ENCODE measurements at regions of chr1 and their contacts with region 1.

Region 1: GRCh38 chr1:32716312-32717148 is 14.0 kb upstream of the SYNC start:
- DNase-seq: peak; percentile 91 to 98
- H3K4me3 ChIP-seq: peak overlapping the region in 3 of 4 experiments; percentile 9 to 28 (median 20); a peak in 4 of 8 replicates
- H3K27ac ChIP-seq: peak overlapping the region; percentile 0; the same call in 1 of the 2 replicates
- H3K4me1 ChIP-seq: peaks cover 0 to 13% (median 13%) of the 10 kb centered on the region in 4 experiments; a peak in 6 of 7 replicates
- H3K27me3 ChIP-seq: no peaks in the 10 kb centered on the region; a peak in 1 of 7 replicates
- CTCF ChIP-seq: no peak
- EP300 ChIP-seq: peak in 1 of 2 experiments; percentile 58; a peak in 1 of 3 replicates
- POLR2A ChIP-seq: peak in 1 of 2 experiments; percentile 39; a peak in 1 of 3 replicates
- RAD21 ChIP-seq: no peak; a peak in 1 of 4 replicates

Region 2: GRCh38 chr1:32684167-32684811 is 32.2 kb before region 1 on chr1:
- CTCF ChIA-PET with region 1: interaction called, 13 read pairs
- POLR2A ChIA-PET with region 1: interaction called, 5 read pairs
- DNase-seq: no peak
- H3K4me3 ChIP-seq: no peak overlapping the region
- H3K27ac ChIP-seq: no peak overlapping the region
- H3K4me1 ChIP-seq: no peaks in the 10 kb centered on the region
- H3K27me3 ChIP-seq: no peaks in the 10 kb centered on the region
- CTCF ChIP-seq: no peak
- EP300 ChIP-seq: no peak
- POLR2A ChIP-seq: no peak
- RAD21 ChIP-seq: no peak

Region 3: GRCh38 chr1:32702599-32703478 is 13.7 kb before region 1 on chr1 and contains the start of gene SYNC:
- CTCF ChIA-PET with region 1: interaction called, 38 read pairs
- POLR2A ChIA-PET with region 1: interaction called, 3 read pairs
- DNase-seq: no peak
- H3K4me3 ChIP-seq: peak within 1 kb of the TSS; percentile 29 to 69 (median 46)
- H3K27ac ChIP-seq: no peak within 1 kb of the TSS
- H3K4me1 ChIP-seq: peaks cover 0 to 15% (median 6%) of the 10 kb centered on the region in 4 experiments; a peak in 6 of 7 replicates
- H3K27me3 ChIP-seq: peaks cover 5 to 35% (median 29%) of the 10 kb centered on the region in 4 experiments
- CTCF ChIP-seq: no peak
- EP300 ChIP-seq: no peak
- POLR2A ChIP-seq: no peak
- RAD21 ChIP-seq: no peak
- total RNA-seq, gene SYNC: 0.17 TPM in 1 of 2 replicates, not detected in the other

Region 4: DNA sequence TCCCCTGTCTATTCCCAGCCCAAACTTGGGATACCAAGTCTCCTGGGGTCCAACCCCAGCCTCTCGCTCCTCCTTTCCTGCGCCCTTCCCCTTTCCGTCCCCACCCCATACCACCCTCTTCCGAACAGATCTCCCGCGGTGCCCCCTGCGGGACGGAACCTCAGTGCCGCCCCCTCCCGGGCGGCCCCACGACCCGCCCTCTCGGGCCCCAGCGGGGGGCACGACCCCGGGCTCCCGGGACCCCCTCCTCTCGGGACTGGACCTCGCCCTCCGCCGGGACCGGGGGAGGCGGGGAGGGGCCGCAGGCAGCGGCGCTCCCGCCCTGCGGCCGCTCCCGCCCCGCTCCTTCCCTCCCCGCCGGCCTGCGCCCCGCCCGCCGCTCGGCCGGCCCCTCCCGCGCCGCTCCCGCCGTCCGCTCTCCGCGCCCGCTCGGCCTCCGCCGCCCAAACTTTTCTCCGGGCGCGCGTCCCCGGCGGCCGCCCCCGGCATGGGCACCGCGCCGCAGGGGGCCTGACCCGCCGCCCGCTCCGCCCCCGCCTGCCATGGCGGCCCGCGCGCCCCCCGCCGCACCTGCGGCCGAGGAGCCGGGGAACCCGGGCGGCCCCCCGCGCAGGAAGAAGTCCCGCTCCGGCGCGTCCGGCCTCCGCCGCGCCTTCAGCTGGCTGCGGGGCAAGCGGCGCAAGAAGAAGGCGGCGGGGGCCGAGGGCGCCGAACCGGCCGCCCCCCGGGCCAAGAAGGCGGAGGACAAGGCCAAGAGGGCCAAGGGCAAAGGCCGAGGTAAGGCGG is 25.1 kb after region 1 on chr1:
- CTCF ChIA-PET with region 1: interaction called, 33 read pairs
- POLR2A ChIA-PET with region 1: interaction called, 8 read pairs
- DNase-seq: peak in 1 of 2 experiments; percentile 71
- H3K4me3 ChIP-seq: peak overlapping the region; percentile 56 to 94 (median 66)
- H3K27ac ChIP-seq: no peak overlapping the region
- H3K4me1 ChIP-seq: peaks cover 9 to 32% (median 28%) of the 10 kb centered on the region in 4 experiments
- H3K27me3 ChIP-seq: peaks cover 0 to 12% (median 4%) of the 10 kb centered on the region in 4 experiments; a peak in 4 of 7 replicates
- CTCF ChIP-seq: peak; percentile 16 to 38 (median 20)
- EP300 ChIP-seq: no peak
- POLR2A ChIP-seq: no peak
- RAD21 ChIP-seq: no peak; a peak in 1 of 4 replicates

Region 5: GRCh38 chr1:32761253-32761880 is 44.8 kb after region 1 on chr1:
- CTCF ChIA-PET with region 1: interaction called, 329 read pairs
- POLR2A ChIA-PET with region 1: interaction called, 12 read pairs
- DNase-seq: peak in 1 of 2 experiments; percentile 54
- H3K4me3 ChIP-seq: peak overlapping the region in 2 of 4 experiments; percentile 12 to 51; a peak in 2 of 8 replicates
- H3K27ac ChIP-seq: peak overlapping the region; percentile 87
- H3K4me1 ChIP-seq: peaks cover 35 to 60% (median 46%) of the 10 kb centered on the region in 4 experiments
- H3K27me3 ChIP-seq: no peaks in the 10 kb centered on the region
- CTCF ChIP-seq: 0 out of 4 replicates have a peak, but pooled peaks of 1 of the 3 experiments have one; percentile 1
- EP300 ChIP-seq: 0 out of 3 replicates have a peak, but pooled peaks of 1 of the 2 experiments have one; percentile 50
- POLR2A ChIP-seq: no peak
- RAD21 ChIP-seq: peak in 1 of 2 experiments; percentile 15; a peak in 2 of 4 replicates

Region 6: DNA sequence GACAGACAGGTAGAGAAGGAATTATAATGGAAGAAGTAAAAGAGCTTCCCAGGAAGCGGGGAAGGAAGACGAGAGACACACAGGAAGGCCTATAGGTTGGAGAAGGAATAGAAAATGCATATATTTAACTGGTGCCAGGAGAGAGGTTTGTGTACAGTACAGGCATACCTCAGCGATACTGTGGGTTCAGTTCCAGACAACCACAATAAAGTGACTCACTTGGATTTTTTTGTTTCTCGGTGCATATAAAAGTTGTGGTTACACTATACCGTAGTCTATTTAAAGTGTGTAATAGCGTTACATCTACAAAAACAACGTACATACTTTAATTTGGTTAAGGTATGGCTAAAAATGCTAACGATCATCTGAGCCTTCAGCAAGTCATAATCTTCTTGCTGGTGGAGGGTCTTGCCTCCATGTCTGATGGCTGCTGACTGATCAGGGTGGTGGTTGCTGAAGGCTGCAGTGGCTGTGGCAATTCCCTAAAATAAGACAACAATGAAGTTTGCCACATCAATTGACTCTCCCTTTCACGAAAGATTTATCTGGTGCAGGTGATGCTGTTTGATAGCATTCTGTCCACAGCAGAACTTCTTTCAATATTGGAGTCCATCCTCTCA is 84.7 kb after region 1 on chr1:
- CTCF ChIA-PET with region 1: no interaction called
- POLR2A ChIA-PET with region 1: no interaction called
- DNase-seq: no peak
- H3K4me3 ChIP-seq: no peak overlapping the region
- H3K27ac ChIP-seq: no peak overlapping the region
- H3K4me1 ChIP-seq: no peaks in the 10 kb centered on the region
- H3K27me3 ChIP-seq: no peaks in the 10 kb centered on the region
- CTCF ChIP-seq: no peak
- EP300 ChIP-seq: no peak
- POLR2A ChIP-seq: no peak
- RAD21 ChIP-seq: no peak

Region 7: GRCh38 chr1:32817159-32817814 is 100.8 kb after region 1 on chr1 and contains the starts of genes S100PBP and YARS1:
- CTCF ChIA-PET with region 1: no interaction called
- POLR2A ChIA-PET with region 1: interaction called, 10 read pairs
- DNase-seq: peak; percentile 97 to 100
- H3K4me3 ChIP-seq: peak within 1 kb of the TSS; percentile 81 to 99 (median 93)
- H3K27ac ChIP-seq: peak within 1 kb of the TSS; percentile 95
- H3K4me1 ChIP-seq: peaks cover 0 to 7% (median 4%) of the 10 kb centered on the region in 4 experiments; a peak in 3 of 7 replicates
- H3K27me3 ChIP-seq: no peaks in the 10 kb centered on the region
- CTCF ChIP-seq: no peak
- EP300 ChIP-seq: peak in 1 of 2 experiments; percentile 96; a peak in 2 of 3 replicates
- POLR2A ChIP-seq: peak in 1 of 2 experiments; percentile 65; a peak in 2 of 3 replicates
- RAD21 ChIP-seq: no peak
- total RNA-seq, gene S100PBP: 65.7 and 68.3 TPM in 2 replicates
- total RNA-seq, gene YARS1: 226 and 230 TPM in 2 replicates